ENCODE measurements at regions of chr3 and their contacts with region 1.

Region 1: GRCh38 chr3:52046186-52046913 is 10.0 kb downstream of the DUSP7 start:
- DNase-seq: no peak

Region 2: DNA sequence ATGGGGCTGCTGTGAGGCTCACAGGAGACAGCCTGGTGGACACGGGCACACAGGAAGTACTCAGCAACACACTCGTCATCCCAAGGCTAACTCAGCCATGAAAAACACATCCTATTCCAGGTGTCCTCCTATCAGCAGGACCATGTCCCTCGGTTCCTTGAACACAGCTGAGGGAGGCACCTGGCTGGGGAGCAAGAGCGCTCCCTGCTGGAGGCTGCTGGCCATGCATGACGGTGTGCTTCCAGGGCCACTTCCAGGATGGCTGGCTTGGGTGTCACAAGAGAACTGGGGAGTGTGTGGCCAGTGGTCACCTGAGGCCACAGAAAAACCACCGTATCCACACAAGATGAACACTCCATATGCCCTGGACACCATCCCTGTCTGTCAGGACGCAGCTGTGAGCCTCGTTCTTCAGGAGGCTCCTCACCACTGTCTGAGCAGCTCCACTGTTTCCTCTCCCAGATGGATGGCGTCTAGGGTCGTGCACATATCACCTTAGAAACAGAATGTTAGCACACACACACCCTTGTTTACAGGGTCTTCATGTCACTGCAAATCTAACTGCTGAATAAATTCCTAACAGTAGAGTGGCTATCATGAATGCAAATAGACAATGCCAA is 76.9 kb after region 1 on chr3:
- in situ Hi-C with region 1: no loop called
- DNase-seq: peak; percentile 81

Region 3: DNA sequence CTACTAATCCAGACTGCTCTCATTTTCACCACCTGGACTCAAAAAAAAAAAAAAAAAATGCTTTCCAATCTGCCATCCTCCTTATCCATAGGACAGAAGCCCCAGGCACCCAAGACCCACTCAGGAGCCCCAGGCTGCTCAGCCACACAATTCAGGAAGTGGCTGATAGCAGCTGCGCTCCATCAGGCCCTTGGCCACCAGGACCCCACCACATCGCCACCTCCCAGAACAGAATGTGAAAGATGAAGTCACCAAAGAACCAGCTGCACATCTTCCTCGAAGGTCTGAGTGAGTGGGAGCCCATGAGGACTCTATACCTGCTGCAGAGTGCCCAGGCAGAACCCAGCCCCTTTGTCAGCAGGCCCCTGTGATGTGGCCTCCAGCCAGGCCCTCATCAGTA is 88.4 kb after region 1 on chr3:
- in situ Hi-C with region 1: no loop called
- DNase-seq: no peak

Region 4: GRCh38 chr3:52144796-52145735 is 98.7 kb after region 1 on chr3:
- in situ Hi-C with region 1: loop called (anchors 5 kb)
- DNase-seq: no peak

Measured in G401 (cell line).